ENCODE measurements at regions of chr4 and their contacts with region 1.

Region 1: GRCh38 chr4:7802093-7802726 is 137.5 kb downstream of the AFAP1 start:
- DNase-seq: peak; percentile 88
- H3K4me3 Mint-ChIP-seq: no peak overlapping the region
- H3K27ac Mint-ChIP-seq: peak overlapping the region; percentile 15
- H3K4me1 Mint-ChIP-seq: peaks cover 17% of the 10 kb centered on the region
- H3K27me3 Mint-ChIP-seq: no peaks in the 10 kb centered on the region

Region 2: DNA sequence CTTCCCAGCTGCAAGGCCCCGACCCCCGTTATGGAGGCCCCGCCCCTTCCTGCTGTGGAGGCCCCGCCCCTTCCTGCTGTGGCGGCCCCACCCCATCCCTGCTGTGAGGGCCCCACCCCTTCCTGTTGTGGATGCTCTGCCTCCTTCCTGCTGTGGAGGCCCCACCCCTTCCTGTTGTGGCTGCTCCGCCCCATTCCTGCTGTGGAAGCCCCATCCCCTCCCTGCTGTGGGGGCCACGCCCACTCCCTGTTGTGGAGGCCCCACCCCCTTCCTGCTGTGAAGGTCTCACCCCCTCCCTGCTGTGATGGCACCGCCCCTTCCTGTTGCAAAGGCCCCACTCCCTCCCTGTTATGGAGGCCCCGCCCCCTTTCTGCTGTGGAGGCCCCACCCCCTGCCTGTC is 262.6 kb before region 1 on chr4:
- CTCF ChIA-PET with region 1: no interaction called
- DNase-seq: peak; percentile 79
- H3K4me3 Mint-ChIP-seq: no peak overlapping the region
- H3K27ac Mint-ChIP-seq: peak overlapping the region; percentile 77
- H3K4me1 Mint-ChIP-seq: peaks cover 2% of the 10 kb centered on the region
- H3K27me3 Mint-ChIP-seq: no peaks in the 10 kb centered on the region

Region 3: GRCh38 chr4:7761720-7762119 is 40.5 kb before region 1 on chr4:
- CTCF ChIA-PET with region 1: interaction called, 99 read pairs
- DNase-seq: peak; percentile 66
- H3K4me3 Mint-ChIP-seq: no peak overlapping the region
- H3K27ac Mint-ChIP-seq: peak overlapping the region; percentile 71
- H3K4me1 Mint-ChIP-seq: peaks cover 46% of the 10 kb centered on the region
- H3K27me3 Mint-ChIP-seq: no peaks in the 10 kb centered on the region

Region 4: GRCh38 chr4:7781366-7781765 is 20.8 kb before region 1 on chr4:
- CTCF ChIA-PET with region 1: interaction called, 47 read pairs
- DNase-seq: no peak
- H3K4me3 Mint-ChIP-seq: no peak overlapping the region
- H3K27ac Mint-ChIP-seq: peak overlapping the region; percentile 46
- H3K4me1 Mint-ChIP-seq: peaks cover 48% of the 10 kb centered on the region
- H3K27me3 Mint-ChIP-seq: no peaks in the 10 kb centered on the region

Region 5: DNA sequence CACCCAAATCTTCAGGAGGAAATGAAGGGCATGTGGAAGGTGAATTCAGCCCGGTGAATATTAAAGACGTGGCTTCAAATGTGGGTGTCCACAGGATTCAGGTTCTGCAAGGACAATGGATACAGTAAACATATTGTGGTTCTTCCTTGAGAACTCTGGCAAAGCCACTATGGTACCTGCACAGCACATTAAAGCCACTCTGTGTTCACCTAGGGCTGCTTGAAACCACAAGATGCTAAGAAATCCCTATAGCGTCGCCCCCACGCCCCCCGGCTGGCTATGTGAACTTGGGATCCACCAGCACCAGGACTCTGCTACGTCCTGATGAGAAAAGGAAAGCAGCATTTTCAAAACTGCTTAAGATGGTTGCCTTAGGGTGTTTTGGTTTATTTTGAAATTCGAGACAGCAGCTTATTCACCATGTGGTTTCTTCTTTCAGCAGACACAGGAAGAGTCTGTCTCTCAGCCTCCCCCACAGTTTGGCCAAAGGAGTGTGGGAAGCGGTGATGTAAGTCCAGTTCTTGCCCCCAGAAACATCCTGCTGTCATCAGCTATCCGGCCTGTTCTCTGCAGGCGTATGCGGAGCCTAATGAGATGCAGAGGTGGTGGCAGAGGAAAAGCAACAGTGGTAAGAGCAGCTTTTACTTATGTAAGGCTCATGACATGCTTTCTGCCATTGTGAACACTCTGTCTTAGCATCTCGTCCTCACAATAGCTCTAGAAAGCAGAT is 25.9 kb after region 1 on chr4:
- CTCF ChIA-PET with region 1: interaction called, 10 read pairs
- DNase-seq: peak; percentile 59
- H3K4me3 Mint-ChIP-seq: peak overlapping the region; percentile 8
- H3K27ac Mint-ChIP-seq: peak overlapping the region; percentile 84
- H3K4me1 Mint-ChIP-seq: peaks cover 54% of the 10 kb centered on the region
- H3K27me3 Mint-ChIP-seq: no peaks in the 10 kb centered on the region

Region 6: GRCh38 chr4:7854697-7855370 is 52.6 kb after region 1 on chr4:
- CTCF ChIA-PET with region 1: interaction called, 15 read pairs
- DNase-seq: peak; percentile 83
- H3K4me3 Mint-ChIP-seq: peak overlapping the region; percentile 40
- H3K27ac Mint-ChIP-seq: peak overlapping the region; percentile 98
- H3K4me1 Mint-ChIP-seq: peaks cover 89% of the 10 kb centered on the region
- H3K27me3 Mint-ChIP-seq: no peaks in the 10 kb centered on the region

Region 7: GRCh38 chr4:7876201-7876875 is 74.1 kb after region 1 on chr4:
- CTCF ChIA-PET with region 1: interaction called, 53 read pairs
- DNase-seq: peak; percentile 67
- H3K4me3 Mint-ChIP-seq: peak overlapping the region; percentile 52
- H3K27ac Mint-ChIP-seq: peak overlapping the region; percentile 92
- H3K4me1 Mint-ChIP-seq: peaks cover 70% of the 10 kb centered on the region
- H3K27me3 Mint-ChIP-seq: no peaks in the 10 kb centered on the region

Region 8: DNA sequence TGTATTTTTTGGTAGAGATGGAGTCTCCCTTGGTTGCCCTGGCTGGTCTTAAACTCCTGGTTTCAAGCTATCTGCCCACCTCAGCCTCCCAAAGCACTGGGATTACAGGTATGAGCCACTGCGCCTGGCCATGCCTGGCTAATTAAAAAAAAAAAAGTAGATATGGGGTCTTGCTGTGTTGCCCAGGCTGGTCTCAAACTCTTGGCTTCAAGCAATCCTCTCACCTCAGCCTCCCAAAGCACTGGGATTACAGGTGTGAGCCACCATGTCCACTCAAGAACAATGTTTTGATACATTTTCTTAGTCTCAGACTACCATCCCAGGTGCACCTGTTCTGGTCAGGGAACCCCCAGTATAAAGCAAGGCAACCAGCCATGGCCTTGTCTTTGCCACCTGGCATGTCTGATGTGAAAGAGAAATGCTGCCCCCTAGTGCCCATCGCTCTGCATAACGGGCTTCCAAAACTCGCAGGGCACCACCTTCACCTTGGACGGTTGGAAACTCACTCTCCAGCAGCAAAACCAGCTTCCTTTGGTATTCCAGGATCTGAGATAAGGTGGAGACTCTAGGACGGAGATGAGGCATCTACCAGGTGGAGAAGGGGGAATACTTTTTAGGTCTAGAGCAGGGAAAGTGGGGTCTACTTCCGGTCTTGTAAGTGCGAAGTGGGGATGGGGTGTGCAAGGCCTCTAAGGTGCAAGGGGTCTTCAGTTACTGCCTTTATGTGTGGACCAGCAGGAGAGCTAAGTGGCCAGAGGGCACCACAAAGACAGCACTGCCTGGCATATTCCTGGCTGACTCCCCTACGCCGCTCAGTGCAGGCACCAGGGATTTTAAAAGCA is 185.2 kb after region 1 on chr4:
- CTCF ChIA-PET with region 1: interaction called, 192 read pairs
- DNase-seq: peak; percentile 85
- H3K4me3 Mint-ChIP-seq: no peak overlapping the region
- H3K27ac Mint-ChIP-seq: no peak overlapping the region
- H3K4me1 Mint-ChIP-seq: peaks cover 9% of the 10 kb centered on the region
- H3K27me3 Mint-ChIP-seq: peaks cover 35% of the 10 kb centered on the region